Activated T-helper 1 cell treated with anti-CD3 and anti-CD28 coated beads, Interleukin-12 subunit alpha, Interleukin-12 subunit beta, Interleukin-2, Interleukin-4 antibody, amounts not matched to agents 30 ng/mL and 10 ng/mL and 1 ng/mL, durations not matched to agents 14 hours and 24 hours and 36 hours (primary cell): ENCODE measurements at regions of chr3 and their contacts with region 1.

Region 1: DNA sequence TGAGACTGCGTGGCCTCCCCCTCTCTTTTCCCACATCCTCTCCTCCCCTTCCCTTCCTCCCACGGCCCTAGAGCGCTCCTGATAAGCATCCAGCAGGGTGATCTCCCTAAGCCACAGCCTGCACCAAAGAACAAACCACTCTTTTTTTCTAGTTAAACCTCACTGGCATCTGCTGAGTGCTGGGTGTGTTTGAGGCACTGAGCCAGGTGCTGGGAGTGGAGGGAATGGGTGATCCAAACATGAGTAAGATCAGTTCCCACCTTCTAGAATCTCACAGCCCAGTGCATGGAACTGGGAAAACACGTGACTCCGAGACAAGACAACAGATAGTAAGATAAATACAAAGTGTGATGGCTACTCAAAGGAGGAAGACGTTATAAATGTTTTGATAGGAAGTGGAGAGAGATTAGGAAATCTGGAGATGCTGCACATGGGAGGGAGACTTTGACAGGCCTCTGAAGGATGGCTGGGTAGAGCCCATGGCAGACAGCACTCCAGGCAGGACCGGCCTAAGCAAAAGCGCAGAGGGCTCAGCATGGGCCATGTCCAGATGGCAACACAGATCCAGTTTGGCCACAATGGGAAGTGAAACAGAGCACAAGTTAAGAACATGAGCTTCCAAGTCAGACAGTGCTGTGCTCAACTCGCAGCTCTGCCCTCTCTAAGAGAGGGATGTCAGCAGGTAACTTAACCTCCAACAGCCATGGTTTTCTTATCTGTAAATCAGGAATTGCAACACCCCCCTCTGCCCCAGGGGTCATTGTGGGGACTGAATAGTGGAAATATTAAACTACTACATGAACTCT is 55.6 kb downstream of the CCR3 start:
- DNase-seq: no peak
- H3K4me3 Mint-ChIP-seq: peak overlapping the region; percentile 34
- H3K27ac Mint-ChIP-seq: peak overlapping the region; percentile 93
- H3K4me1 Mint-ChIP-seq: peaks cover 84% of the 10 kb centered on the region
- H3K27me3 Mint-ChIP-seq: no peaks in the 10 kb centered on the region

Region 2: GRCh38 chr3:45688882-45689756 is 608.7 kb before region 1 on chr3 and contains the start of gene SACM1L:
- intact Hi-C with region 1: loop called (anchors 5 kb)
- DNase-seq: peak; percentile 96
- H3K4me3 Mint-ChIP-seq: peak within 1 kb of the TSS; percentile 95
- H3K27ac Mint-ChIP-seq: peak within 1 kb of the TSS; percentile 100
- H3K4me1 Mint-ChIP-seq: peaks cover 59% of the 10 kb centered on the region
- H3K27me3 Mint-ChIP-seq: peaks cover 4% of the 10 kb centered on the region
- total RNA-seq, gene SACM1L: 112 and 114 TPM in 2 replicates

Region 3: GRCh38 chr3:45962033-45962432 is 335.8 kb before region 1 on chr3:
- intact Hi-C with region 1: loop called (anchors 2 kb)
- DNase-seq: peak; percentile 48
- H3K4me3 Mint-ChIP-seq: peak overlapping the region; percentile 54
- H3K27ac Mint-ChIP-seq: peak overlapping the region; percentile 73
- H3K4me1 Mint-ChIP-seq: peaks cover 88% of the 10 kb centered on the region
- H3K27me3 Mint-ChIP-seq: no peaks in the 10 kb centered on the region

Region 4: DNA sequence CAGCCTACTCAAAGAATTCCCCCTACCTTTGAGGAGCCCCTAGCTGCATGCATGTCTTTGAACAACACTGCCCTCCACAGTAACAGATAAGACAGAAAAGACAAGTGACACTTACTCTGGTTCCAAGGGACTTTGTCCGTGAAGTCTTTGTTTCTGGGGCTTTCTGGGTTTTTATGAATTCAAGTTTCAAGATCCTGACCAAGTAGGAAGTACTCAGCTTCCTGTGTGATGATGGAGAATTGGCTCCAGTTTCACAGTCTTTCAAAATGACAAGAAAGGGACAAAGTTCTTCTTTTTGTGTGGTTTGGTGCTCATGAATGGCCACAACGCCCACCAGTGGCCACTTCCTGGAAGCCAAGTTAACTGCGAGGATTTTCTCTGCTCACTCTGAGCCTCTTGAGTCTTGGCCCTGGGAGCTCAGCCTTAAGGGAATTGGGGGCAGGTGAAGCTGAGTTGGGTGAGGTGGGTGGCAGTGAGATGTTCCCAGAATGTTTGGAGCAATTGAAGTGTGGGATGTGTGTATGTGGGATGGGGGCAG is 89.6 kb before region 1 on chr3 and contains the start of gene CCR1:
- intact Hi-C with region 1: loop called (anchors 1 kb)
- DNase-seq: peak; percentile 58
- H3K4me3 Mint-ChIP-seq: peak within 1 kb of the TSS; percentile 78
- H3K27ac Mint-ChIP-seq: peak within 1 kb of the TSS; percentile 91
- H3K4me1 Mint-ChIP-seq: peaks cover 70% of the 10 kb centered on the region
- H3K27me3 Mint-ChIP-seq: no peaks in the 10 kb centered on the region
- total RNA-seq, gene CCR1: 22.6 and 23.2 TPM in 2 replicates

Region 5: GRCh38 chr3:46284981-46285683 is 12.7 kb before region 1 on chr3:
- intact Hi-C with region 1: loop called (anchors 1 kb)
- DNase-seq: peak; percentile 54
- H3K4me3 Mint-ChIP-seq: peak overlapping the region; percentile 59
- H3K27ac Mint-ChIP-seq: peak overlapping the region; percentile 85
- H3K4me1 Mint-ChIP-seq: peaks cover 82% of the 10 kb centered on the region
- H3K27me3 Mint-ChIP-seq: no peaks in the 10 kb centered on the region

Region 6: GRCh38 chr3:46349485-46350261 is 51.8 kb after region 1 on chr3:
- intact Hi-C with region 1: loop called (anchors 1 kb)
- DNase-seq: no peak
- H3K4me3 Mint-ChIP-seq: peak overlapping the region; percentile 54
- H3K27ac Mint-ChIP-seq: peak overlapping the region; percentile 88
- H3K4me1 Mint-ChIP-seq: peaks cover 72% of the 10 kb centered on the region
- H3K27me3 Mint-ChIP-seq: peaks cover 7% of the 10 kb centered on the region

Region 7: DNA sequence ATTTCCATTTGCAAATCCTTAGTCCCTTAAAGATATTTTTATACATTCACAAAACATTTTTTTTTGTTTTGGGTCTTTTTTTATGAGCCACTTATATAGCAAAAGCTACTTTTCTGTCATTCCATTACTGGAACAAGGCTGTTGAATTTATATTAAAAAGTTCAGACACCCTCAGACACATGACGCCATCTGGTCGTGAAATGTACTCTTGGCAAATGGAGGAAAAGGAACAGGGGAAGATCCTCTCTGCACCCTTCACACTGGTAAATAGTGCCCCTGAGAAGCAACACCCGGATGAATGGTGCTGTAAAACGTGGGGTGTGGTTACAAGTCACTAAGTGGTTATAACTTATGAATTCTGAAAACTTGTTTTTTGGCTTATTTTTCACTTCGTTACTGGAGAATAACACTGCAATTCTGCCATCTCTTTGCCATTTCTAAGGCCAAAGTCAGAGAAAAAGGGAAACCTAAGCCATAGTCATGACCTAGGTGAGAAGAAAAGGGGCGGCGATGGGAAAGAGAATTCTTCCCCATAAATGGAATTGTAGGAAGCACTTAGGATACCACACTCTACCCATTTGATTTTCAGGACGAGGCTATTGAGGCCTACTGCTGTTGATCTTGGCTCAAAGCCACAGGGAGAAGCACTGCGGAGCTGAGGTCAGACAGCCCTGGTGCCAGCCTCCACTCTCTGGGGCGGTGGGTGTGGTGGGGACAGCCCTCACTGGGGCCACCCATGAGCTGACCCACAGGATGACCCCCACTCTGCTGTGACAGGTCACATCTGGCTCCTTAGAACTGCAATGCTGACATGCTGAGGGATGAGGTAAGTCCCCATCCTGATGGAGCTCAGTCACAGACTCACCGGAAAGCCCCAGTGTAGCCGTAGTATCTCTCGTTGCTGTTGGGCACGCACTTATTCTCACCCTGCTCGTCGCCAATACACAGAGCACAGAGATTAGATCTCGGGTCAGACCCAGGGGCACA is 145.0 kb after region 1 on chr3:
- intact Hi-C with region 1: loop called (anchors 5 kb)
- DNase-seq: peak; percentile 31
- H3K4me3 Mint-ChIP-seq: no peak overlapping the region
- H3K27ac Mint-ChIP-seq: no peak overlapping the region
- H3K4me1 Mint-ChIP-seq: peaks cover 25% of the 10 kb centered on the region
- H3K27me3 Mint-ChIP-seq: peaks cover 4% of the 10 kb centered on the region